ENCODE measurements at regions of chr6 and their contacts with region 1.

Region 1: GRCh38 chr6:149473080-149474052 is 11.4 kb downstream of the ZC3H12D start:
- DNase-seq: no peak
- ATAC-seq: peak; percentile 24
- H3K4me3 ChIP-seq: peak overlapping the region; percentile 44; the same call in 1 of the 2 replicates
- H3K27ac ChIP-seq: peak overlapping the region; percentile 29
- H3K4me1 ChIP-seq: peaks cover 63% of the 10 kb centered on the region
- H3K27me3 ChIP-seq: no peaks in the 10 kb centered on the region
- CTCF ChIP-seq: peak in 2 of 3 experiments; percentile 12 to 27; a peak in 1 of 6 replicates
- EP300 ChIP-seq: no peak
- POLR2A ChIP-seq: no peak
- RAD21 ChIP-seq: peak; percentile 34; the same call in 1 of the 2 replicates

Region 2: GRCh38 chr6:149235130-149235561 is 238.2 kb before region 1 on chr6:
- CTCF ChIA-PET with region 1: no interaction called
- POLR2A ChIA-PET with region 1: no interaction called
- RAD21 ChIA-PET with region 1: no interaction called
- SMC1A ChIA-PET with region 1: no interaction called
- in situ Hi-C with region 1: no loop called
- intact Hi-C with region 1: no loop called
- DNase-seq: peak; percentile 69
- ATAC-seq: peak; percentile 91
- H3K4me3 ChIP-seq: no peak overlapping the region
- H3K27ac ChIP-seq: peak overlapping the region; percentile 73
- H3K4me1 ChIP-seq: peaks cover 37% of the 10 kb centered on the region
- H3K27me3 ChIP-seq: no peaks in the 10 kb centered on the region
- CTCF ChIP-seq: no peak
- EP300 ChIP-seq: peak; percentile 37 to 71; a peak in 2 of 4 replicates
- POLR2A ChIP-seq: no peak
- RAD21 ChIP-seq: no peak

Region 3: GRCh38 chr6:149493761-149494320 is 20.5 kb after region 1 on chr6:
- CTCF ChIA-PET with region 1: interaction called, 20 read pairs
- POLR2A ChIA-PET with region 1: interaction called, 10 read pairs
- RAD21 ChIA-PET with region 1: interaction called, 18 read pairs
- SMC1A ChIA-PET with region 1: interaction called, 25 read pairs
- in situ Hi-C with region 1: no loop called
- intact Hi-C with region 1: no loop called
- DNase-seq: no peak
- ATAC-seq: no peak
- H3K4me3 ChIP-seq: no peak overlapping the region
- H3K27ac ChIP-seq: no peak overlapping the region
- H3K4me1 ChIP-seq: peaks cover 47% of the 10 kb centered on the region
- H3K27me3 ChIP-seq: no peaks in the 10 kb centered on the region
- CTCF ChIP-seq: no peak
- EP300 ChIP-seq: no peak
- POLR2A ChIP-seq: no peak
- RAD21 ChIP-seq: no peak

Region 4: DNA sequence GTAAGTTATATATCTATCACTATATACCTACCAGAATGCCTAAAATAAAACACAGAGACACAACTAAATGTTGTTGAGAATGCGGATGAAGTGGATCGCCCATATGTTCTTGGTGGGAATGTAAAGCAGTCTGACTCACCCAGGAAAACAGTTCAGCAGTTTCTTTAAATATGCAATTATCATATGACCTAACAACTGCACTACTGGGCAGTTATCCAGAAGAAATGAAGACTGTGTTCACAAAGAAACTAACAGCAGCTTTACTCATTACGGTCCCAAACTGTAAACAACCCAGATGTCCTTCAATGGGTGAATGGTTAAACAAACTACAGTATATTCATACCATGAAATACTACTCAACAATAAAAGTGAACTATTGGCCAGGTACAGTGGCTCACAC is 25.7 kb after region 1 on chr6:
- CTCF ChIA-PET with region 1: interaction called, 9 read pairs
- POLR2A ChIA-PET with region 1: interaction called, 5 read pairs
- RAD21 ChIA-PET with region 1: interaction called, 18 read pairs
- SMC1A ChIA-PET with region 1: interaction called, 25 read pairs
- in situ Hi-C with region 1: no loop called
- intact Hi-C with region 1: no loop called
- DNase-seq: no peak
- ATAC-seq: no peak
- H3K4me3 ChIP-seq: no peak overlapping the region
- H3K27ac ChIP-seq: no peak overlapping the region
- H3K4me1 ChIP-seq: peaks cover 31% of the 10 kb centered on the region
- H3K27me3 ChIP-seq: no peaks in the 10 kb centered on the region
- CTCF ChIP-seq: no peak
- EP300 ChIP-seq: no peak
- POLR2A ChIP-seq: no peak
- RAD21 ChIP-seq: no peak

Region 5: DNA sequence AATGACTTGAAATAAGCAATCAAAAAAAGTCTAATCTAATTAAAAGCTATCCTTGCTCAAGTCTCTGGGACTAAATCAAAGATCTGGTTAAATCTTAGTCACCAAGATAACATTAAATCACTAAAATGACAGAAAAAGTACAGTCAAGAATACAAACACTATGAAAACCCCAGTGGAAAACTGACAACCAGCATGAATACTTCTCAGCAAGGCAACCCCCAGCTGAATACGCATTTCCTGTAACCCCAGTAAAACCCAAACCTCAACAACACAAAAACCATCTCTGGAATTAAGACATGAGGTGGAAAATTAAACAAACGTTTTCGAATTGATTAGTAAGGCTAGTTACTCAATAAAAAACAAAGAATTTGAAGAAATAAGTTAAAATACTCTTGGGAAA is 35.1 kb after region 1 on chr6:
- CTCF ChIA-PET with region 1: interaction called, 9 read pairs
- POLR2A ChIA-PET with region 1: no interaction called
- RAD21 ChIA-PET with region 1: interaction called, 9 read pairs
- SMC1A ChIA-PET with region 1: interaction called, 11 read pairs
- in situ Hi-C with region 1: no loop called
- intact Hi-C with region 1: no loop called
- DNase-seq: no peak
- ATAC-seq: no peak
- H3K4me3 ChIP-seq: no peak overlapping the region
- H3K27ac ChIP-seq: peak overlapping the region; percentile 28; the same call in 1 of the 2 replicates
- H3K4me1 ChIP-seq: no peaks in the 10 kb centered on the region
- H3K27me3 ChIP-seq: no peaks in the 10 kb centered on the region
- CTCF ChIP-seq: no peak
- EP300 ChIP-seq: no peak
- POLR2A ChIP-seq: no peak
- RAD21 ChIP-seq: no peak

Region 6: GRCh38 chr6:149580880-149581279 is 107.5 kb after region 1 on chr6:
- CTCF ChIA-PET with region 1: no interaction called
- POLR2A ChIA-PET with region 1: no interaction called
- RAD21 ChIA-PET with region 1: no interaction called
- SMC1A ChIA-PET with region 1: no interaction called
- in situ Hi-C with region 1: no loop called
- intact Hi-C with region 1: no loop called
- DNase-seq: no peak
- ATAC-seq: no peak
- H3K4me3 ChIP-seq: no peak overlapping the region
- H3K27ac ChIP-seq: no peak overlapping the region
- H3K4me1 ChIP-seq: no peaks in the 10 kb centered on the region
- H3K27me3 ChIP-seq: no peaks in the 10 kb centered on the region
- CTCF ChIP-seq: no peak
- EP300 ChIP-seq: no peak
- POLR2A ChIP-seq: no peak
- RAD21 ChIP-seq: no peak